Gastrocnemius medialis (tissue), 4 donors: ENCODE measurements at regions of chr20 and their contacts with region 1.

Region 1: DNA sequence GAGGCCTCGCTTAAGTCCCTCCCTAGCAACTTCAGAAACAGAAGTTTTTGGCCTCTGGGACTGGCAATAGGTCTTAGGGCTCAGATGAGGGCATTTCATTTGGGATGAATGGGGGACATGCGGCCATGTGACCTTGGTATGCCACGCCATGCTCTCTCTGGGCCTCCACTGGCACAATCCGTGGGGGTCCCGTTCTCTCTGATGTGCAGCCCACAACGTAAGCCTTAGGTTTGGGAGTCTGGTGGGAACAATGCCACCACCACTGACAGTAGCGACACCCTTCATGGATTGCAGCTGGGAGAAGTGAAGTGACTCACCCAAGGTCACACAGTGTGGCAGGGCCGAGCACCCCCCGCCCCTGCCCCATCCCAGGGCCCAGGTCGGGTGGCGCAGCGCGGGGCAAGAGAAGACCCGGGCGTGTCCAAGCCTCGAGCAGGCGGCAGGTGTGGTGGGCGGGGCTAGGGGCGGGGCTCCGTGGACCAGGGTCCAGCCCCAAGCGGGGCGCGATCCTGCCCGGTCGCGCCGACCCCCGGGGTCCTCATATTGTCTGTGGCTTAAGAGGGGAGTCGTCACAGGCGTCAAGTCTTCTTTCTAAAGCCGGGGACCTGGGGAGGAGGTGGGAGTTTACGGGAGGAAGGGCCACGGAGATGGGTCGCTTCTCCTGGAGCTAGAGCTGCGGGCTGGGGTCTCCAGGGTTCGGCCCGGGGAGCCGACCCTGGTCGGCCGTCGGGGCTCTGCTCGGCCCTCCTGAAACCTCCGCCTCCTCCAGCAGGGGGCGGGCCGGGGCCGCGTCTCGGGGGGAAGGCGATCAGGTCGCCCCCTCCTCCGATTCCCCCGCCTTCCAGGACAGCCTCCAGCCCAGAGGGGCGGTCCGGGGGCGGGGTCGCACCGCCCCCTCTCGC is 698 bp upstream of the CEBPB start:
- DNase-seq: peak; percentile 86 to 87
- ATAC-seq: peak; percentile 45 to 48
- H3K4me3 ChIP-seq: peak overlapping the region; percentile 86 to 96 (median 90)
- H3K27ac ChIP-seq: peak overlapping the region; percentile 91 to 100 (median 97)
- H3K4me1 ChIP-seq: peaks cover 5 to 20% of the 10 kb centered on the region in 2 donors
- H3K27me3 ChIP-seq: no peaks in the 10 kb centered on the region
- CTCF ChIP-seq: peak; percentile 70 to 94 (median 89)
- POLR2A ChIP-seq: no peak

Region 2: GRCh38 chr20:50224531-50225255 is 34.8 kb after region 1 on chr20:
- in situ Hi-C with region 1: no loop called
- intact Hi-C with region 1: loop called (anchors 2 kb)
- DNase-seq: peak; percentile 74 to 88
- ATAC-seq: peak; percentile 89
- H3K4me3 ChIP-seq: no peak overlapping the region
- H3K27ac ChIP-seq: peak overlapping the region; percentile 60 to 81 (median 75)
- H3K4me1 ChIP-seq: peaks cover 7 to 14% of the 10 kb centered on the region in 2 donors
- H3K27me3 ChIP-seq: no peaks in the 10 kb centered on the region
- CTCF ChIP-seq: peak in 2 of 5 experiments; percentile 27 to 50
- POLR2A ChIP-seq: peak in 1 of 2 donors; percentile 23

Region 3: DNA sequence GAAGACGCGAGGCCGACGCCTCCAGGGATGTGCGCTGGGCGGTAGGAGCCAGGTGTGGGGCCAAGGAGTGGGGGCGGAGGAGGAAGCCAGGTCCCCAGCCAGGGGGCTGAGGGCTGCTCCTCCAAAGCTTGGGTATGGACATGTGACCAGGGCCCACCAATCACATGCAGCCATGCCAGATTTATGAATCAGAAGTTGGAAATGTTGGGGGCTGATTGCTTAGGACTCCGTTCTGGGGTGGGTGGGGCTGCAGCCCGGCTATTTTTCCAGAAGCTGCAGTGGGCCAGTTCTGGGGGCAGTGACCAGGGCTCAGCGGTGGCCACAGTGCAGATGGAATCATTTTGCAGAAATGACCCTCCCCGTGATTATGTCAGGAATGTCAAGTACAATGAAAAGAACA is 96.7 kb after region 1 on chr20:
- in situ Hi-C with region 1: loop called in 1 of 4 experiments (anchors 10 kb)
- intact Hi-C with region 1: no loop called
- DNase-seq: peak in 1 of 2 donors; percentile 68
- ATAC-seq: peak in 1 of 2 donors; percentile 23
- H3K4me3 ChIP-seq: no peak overlapping the region
- H3K27ac ChIP-seq: peak overlapping the region; percentile 82 to 96 (median 90)
- H3K4me1 ChIP-seq: peaks cover 37 to 41% of the 10 kb centered on the region in 2 donors
- H3K27me3 ChIP-seq: no peaks in the 10 kb centered on the region
- CTCF ChIP-seq: no peak
- POLR2A ChIP-seq: peak in 1 of 2 donors; percentile 15

Region 4: DNA sequence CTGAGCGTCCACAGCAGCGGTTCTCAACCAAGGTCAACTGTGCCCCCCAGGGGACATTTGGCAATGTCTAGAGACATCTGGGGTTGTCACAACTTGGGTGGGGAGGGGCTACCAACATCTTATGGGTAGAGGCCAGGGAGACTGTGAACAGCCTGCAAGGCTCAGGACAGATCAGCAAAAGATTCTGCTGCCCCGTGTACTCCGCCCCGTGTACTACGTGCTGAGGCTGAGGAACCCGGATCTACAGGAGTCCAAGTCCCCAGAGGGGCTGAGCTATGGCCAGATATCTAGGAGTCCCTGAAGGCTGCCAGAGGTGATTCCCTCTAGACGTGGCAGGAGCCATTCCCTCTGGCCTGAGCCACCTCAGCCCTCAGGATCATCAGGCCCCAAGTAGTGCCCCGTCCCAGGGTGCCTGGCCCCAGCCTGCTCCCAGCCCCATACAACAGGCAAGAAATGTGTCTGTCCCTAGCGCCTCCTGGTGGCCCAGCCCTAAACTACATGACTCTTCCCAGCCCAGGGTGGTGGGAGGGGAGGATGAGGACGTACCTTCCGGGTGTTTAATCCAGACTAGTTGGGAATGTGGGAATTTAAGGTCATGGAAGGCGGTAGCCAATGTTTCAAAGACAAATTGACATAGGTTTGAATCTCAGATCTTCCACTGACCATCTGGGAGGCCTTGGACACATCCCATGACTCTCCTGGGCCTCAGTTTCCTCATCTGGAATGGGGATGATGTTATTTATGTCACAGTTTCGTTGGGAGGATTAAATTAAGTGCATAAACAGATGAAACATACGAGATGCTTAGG is 270.7 kb after region 1 on chr20:
- in situ Hi-C with region 1: loop called (anchors 5 kb)
- intact Hi-C with region 1: loop called (anchors 1 kb)
- DNase-seq: peak; percentile 80 to 90
- ATAC-seq: peak; percentile 80 to 82
- H3K4me3 ChIP-seq: no peak overlapping the region
- H3K27ac ChIP-seq: peak overlapping the region; percentile 68 to 80 (median 78)
- H3K4me1 ChIP-seq: peaks cover 18 to 21% of the 10 kb centered on the region in 2 donors
- H3K27me3 ChIP-seq: no peaks in the 10 kb centered on the region
- CTCF ChIP-seq: peak; percentile 91 to 99 (median 95)
- POLR2A ChIP-seq: no peak

Region 5: DNA sequence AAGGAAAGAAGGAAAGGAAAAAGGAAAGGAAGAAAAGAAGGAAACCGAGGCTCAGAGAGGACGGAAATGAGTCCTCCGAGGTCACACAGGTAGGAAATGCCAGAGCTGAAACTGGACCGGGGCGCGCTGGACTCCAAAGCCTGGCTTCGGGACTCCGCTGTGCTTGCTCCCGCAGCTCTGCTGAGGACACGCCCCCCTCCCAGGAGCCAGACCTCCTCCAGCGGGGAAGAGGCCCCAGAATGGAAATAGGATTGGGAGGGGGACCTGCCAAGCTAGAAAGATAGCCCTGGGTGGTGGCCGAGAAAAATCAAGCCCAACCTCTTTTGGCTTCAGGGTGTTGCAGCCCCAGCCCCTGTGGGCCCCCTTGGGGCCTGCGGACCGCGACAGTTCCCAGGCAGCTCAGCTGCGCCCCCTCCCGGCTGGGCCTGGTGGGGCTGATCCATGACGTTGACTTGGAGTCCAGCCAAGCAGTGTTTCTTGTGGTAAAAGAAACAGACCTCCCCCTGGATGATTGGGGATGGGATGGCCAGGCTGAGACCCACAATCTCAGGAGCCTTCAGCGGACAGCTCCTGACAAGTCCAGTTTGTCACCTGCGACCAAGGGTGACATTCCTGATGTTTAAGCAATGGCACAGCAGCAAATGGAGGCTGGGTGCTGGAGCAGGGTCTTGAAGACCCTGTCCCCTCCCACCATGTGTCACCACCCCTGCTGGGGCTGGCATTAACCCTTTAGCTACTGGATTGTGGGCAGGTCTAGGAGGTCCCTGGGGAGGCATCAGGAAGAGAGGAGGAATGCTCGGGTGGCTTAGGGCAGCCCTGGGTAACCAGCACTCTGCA is 446.0 kb after region 1 on chr20:
- in situ Hi-C with region 1: no loop called
- intact Hi-C with region 1: loop called (anchors 1 kb)
- DNase-seq: peak; percentile 49 to 56
- ATAC-seq: peak; percentile 82 to 88
- H3K4me3 ChIP-seq: peak overlapping the region; percentile 27 to 52 (median 38)
- H3K27ac ChIP-seq: peak overlapping the region; percentile 0 to 60 (median 54)
- H3K4me1 ChIP-seq: peaks cover 0 to 7% of the 10 kb centered on the region in 2 donors
- H3K27me3 ChIP-seq: no peaks in the 10 kb centered on the region
- CTCF ChIP-seq: peak; percentile 84 to 93 (median 90)
- POLR2A ChIP-seq: no peak

Region 6: GRCh38 chr20:50762435-50763201 is 572.7 kb after region 1 on chr20:
- in situ Hi-C with region 1: loop called in 1 of 4 experiments (anchors 25 kb)
- intact Hi-C with region 1: no loop called
- DNase-seq: peak; percentile 89 to 96
- ATAC-seq: peak; percentile 94
- H3K4me3 ChIP-seq: no peak overlapping the region
- H3K27ac ChIP-seq: peak overlapping the region; percentile 81 to 90 (median 86)
- H3K4me1 ChIP-seq: peaks cover 22 to 36% of the 10 kb centered on the region in 2 donors
- H3K27me3 ChIP-seq: no peaks in the 10 kb centered on the region
- CTCF ChIP-seq: peak in 1 of 5 experiments; percentile 26
- POLR2A ChIP-seq: no peak